CD4-positive, alpha-beta T cell (primary cell): ENCODE measurements at regions of chr21 and their contacts with region 1.

Region 1: GRCh38 chr21:34362136-34362444 is 1.7 kb upstream of the KCNE2 start:
- DNase-seq: no peak
- ATAC-seq: no peak
- H3K4me3 ChIP-seq: no peak overlapping the region
- H3K4me3 Mint-ChIP-seq: no peak overlapping the region
- H3K27ac ChIP-seq: no peak overlapping the region
- H3K27ac Mint-ChIP-seq: no peak overlapping the region
- H3K4me1 ChIP-seq: peaks cover 6% of the 10 kb centered on the region
- H3K4me1 Mint-ChIP-seq: peaks cover 6% of the 10 kb centered on the region
- H3K27me3 ChIP-seq: no peaks in the 10 kb centered on the region
- H3K27me3 Mint-ChIP-seq: peaks cover 21% of the 10 kb centered on the region
- CTCF ChIP-seq: peak; percentile 59

Region 2: DNA sequence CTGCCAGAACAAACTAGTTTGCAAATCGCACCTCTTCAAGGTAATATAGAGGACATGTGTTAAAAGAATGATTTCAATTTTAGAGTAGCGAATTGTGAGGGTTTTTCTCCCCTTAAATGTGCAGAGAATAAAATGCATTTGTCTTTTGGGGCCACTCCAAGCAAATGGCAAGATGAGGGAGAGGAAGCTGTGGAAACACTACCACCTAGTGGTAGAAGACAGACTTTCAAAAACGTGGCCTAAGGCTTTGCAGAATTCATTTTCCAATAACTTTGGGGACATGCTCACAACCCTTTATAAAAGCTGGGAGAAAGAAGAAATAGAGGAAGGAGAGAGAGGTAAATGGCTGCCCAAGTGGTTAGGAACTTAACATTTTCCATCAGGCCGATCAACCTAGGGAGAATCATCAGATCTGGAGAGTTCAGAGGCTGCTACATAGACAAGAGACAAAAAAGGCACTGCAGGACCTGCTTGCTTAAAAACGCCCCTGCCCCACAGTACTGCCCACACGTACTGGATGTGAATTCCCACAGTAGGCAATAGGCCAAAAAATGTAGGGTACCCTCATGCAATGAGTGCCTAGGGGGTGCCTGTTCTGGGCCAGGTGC is 268.6 kb after region 1 on chr21:
- CTCF ChIA-PET with region 1: interaction called, 7 read pairs
- POLR2A ChIA-PET with region 1: interaction called, 3 read pairs
- intact Hi-C with region 1: loop called (anchors 1 kb)
- DNase-seq: peak in 6 of 14 experiments; percentile 3 to 77 (median 48)
- ATAC-seq: peak; percentile 71
- H3K4me3 ChIP-seq: no peak overlapping the region
- H3K4me3 Mint-ChIP-seq: no peak overlapping the region
- H3K27ac ChIP-seq: no peak overlapping the region
- H3K27ac Mint-ChIP-seq: no peak overlapping the region
- H3K4me1 ChIP-seq: no peaks in the 10 kb centered on the region
- H3K4me1 Mint-ChIP-seq: no peaks in the 10 kb centered on the region
- H3K27me3 ChIP-seq: peaks cover 0 to 14% of the 10 kb centered on the region in 2 experiments
- H3K27me3 Mint-ChIP-seq: peaks cover 10% of the 10 kb centered on the region
- CTCF ChIP-seq: peak; percentile 82